GM12878 (cell line): ENCODE measurements at regions of chr16 and their contacts with region 1.

Region 1: DNA sequence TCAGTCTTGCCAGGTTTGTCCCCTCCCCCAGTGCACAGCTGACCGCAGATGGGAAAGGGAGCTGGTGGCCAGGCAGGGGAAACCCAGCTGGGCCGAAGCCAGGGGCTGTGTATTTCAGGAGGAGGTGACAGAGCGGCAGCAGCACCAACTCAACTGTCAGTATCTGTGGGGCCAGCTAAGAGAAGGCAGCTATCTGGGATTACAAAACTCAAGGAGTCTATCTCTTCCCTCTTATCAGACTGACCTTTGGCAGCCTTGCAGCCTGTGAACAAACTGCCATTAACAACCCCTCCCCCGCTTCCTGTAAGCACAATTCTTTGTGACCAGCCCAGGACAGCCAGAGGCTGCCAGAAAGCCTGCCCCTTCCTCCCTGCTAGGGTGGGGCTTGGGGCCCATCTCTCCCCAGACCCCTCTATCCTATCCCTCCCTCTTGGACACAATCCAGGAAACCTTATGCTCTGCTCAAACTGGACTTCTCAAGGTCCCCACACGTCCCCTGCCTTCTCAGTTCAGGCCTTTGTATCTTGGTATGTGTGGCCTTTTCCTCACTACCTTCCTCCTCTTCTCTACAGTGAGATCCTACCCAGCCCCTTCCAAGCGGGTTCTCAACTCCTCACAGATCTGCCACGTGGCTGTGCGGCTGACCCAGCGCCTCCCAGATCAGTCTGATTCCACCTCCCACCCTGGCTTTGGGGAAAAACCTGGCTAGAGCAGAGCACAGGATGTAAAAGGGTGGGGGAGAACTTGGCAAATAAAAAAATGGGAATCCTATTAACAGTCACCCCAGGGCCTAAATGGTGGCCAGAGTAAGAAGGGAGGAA is 10.5 kb downstream of the ST3GAL2 start:
- DNase-seq: peak; percentile 79
- ATAC-seq: peak; percentile 36
- H3K4me3 ChIP-seq: peak overlapping the region; percentile 67
- H3K27ac ChIP-seq: peak overlapping the region; percentile 98
- H3K4me1 ChIP-seq: peaks cover 52% of the 10 kb centered on the region
- H3K27me3 ChIP-seq: no peaks in the 10 kb centered on the region
- CTCF ChIP-seq: no peak
- EP300 ChIP-seq: peak in 1 of 2 experiments; percentile 74; a peak in 2 of 4 replicates
- POLR2A ChIP-seq: peak; percentile 61
- RAD21 ChIP-seq: peak; percentile 17; the same call in 1 of the 2 replicates

Region 2: GRCh38 chr16:69709456-69710084 is 718.8 kb before region 1 on chr16:
- CTCF ChIA-PET with region 1: no interaction called
- POLR2A ChIA-PET with region 1: no interaction called
- RAD21 ChIA-PET with region 1: no interaction called
- SMC1A ChIA-PET with region 1: no interaction called
- in situ Hi-C with region 1: no loop called
- intact Hi-C with region 1: no loop called
- DNase-seq: peak; percentile 15
- ATAC-seq: peak; percentile 83
- H3K4me3 ChIP-seq: no peak overlapping the region
- H3K27ac ChIP-seq: no peak overlapping the region
- H3K4me1 ChIP-seq: no peaks in the 10 kb centered on the region
- H3K27me3 ChIP-seq: no peaks in the 10 kb centered on the region
- CTCF ChIP-seq: peak; percentile 43 to 74 (median 64); a peak in 5 of 6 replicates
- EP300 ChIP-seq: no peak
- POLR2A ChIP-seq: no peak
- RAD21 ChIP-seq: peak; percentile 73

Region 3: GRCh38 chr16:70306880-70307279 is 121.5 kb before region 1 on chr16:
- CTCF ChIA-PET with region 1: no interaction called
- POLR2A ChIA-PET with region 1: no interaction called
- RAD21 ChIA-PET with region 1: no interaction called
- SMC1A ChIA-PET with region 1: no interaction called
- in situ Hi-C with region 1: no loop called
- intact Hi-C with region 1: no loop called
- DNase-seq: no peak
- ATAC-seq: no peak
- H3K4me3 ChIP-seq: no peak overlapping the region
- H3K27ac ChIP-seq: no peak overlapping the region
- H3K4me1 ChIP-seq: peaks cover 4% of the 10 kb centered on the region
- H3K27me3 ChIP-seq: no peaks in the 10 kb centered on the region
- CTCF ChIP-seq: no peak
- EP300 ChIP-seq: no peak
- POLR2A ChIP-seq: no peak
- RAD21 ChIP-seq: no peak

Region 4: GRCh38 chr16:70388006-70388680 is 40.2 kb before region 1 on chr16:
- CTCF ChIA-PET with region 1: no interaction called
- POLR2A ChIA-PET with region 1: no interaction called
- RAD21 ChIA-PET with region 1: no interaction called
- SMC1A ChIA-PET with region 1: no interaction called
- in situ Hi-C with region 1: no loop called
- intact Hi-C with region 1: no loop called
- DNase-seq: no peak
- ATAC-seq: no peak
- H3K4me3 ChIP-seq: no peak overlapping the region
- H3K27ac ChIP-seq: no peak overlapping the region
- H3K4me1 ChIP-seq: no peaks in the 10 kb centered on the region
- H3K27me3 ChIP-seq: no peaks in the 10 kb centered on the region
- CTCF ChIP-seq: no peak
- EP300 ChIP-seq: no peak
- POLR2A ChIP-seq: no peak
- RAD21 ChIP-seq: no peak

Region 5: DNA sequence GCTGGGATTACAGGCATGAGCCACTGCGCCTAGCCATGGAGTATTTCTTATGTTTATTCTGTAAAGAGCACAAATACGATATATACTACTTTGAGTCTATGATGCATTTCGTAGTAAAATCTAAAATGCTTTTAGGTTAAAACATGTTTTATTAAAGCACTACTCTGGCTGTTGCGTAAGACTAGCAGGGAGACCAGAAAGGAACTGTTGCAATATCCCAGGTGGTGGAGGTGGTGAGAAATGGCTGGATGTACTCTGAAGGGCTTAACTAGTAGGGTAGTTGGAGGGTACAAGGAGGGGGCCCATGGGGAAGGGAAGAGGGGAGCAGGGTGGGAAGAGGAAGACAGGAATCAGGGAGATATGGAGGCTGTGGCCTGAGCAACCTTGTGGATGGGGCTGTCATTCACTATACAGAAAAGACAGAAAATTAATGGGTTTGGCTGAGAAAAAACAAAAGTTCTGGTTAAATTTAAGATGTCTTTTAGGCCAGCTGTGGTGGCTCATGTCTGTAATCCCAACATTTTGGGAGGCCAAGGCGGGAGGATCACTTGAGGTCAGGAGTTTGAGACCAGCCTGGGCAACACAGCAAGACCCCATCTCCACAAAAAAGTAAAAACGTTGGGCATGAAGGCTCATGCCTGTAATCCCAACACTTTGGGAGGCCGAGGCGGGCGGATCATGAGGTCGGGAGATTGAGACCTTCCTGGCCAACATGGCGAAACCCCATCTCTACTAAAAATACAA is 25.3 kb before region 1 on chr16:
- CTCF ChIA-PET with region 1: interaction called, 10 read pairs
- POLR2A ChIA-PET with region 1: interaction called, 47 read pairs
- RAD21 ChIA-PET with region 1: interaction called, 38 read pairs
- SMC1A ChIA-PET with region 1: interaction called, 37 read pairs
- in situ Hi-C with region 1: no loop called
- intact Hi-C with region 1: loop called (anchors 1 kb)
- DNase-seq: no peak
- ATAC-seq: no peak
- H3K4me3 ChIP-seq: no peak overlapping the region
- H3K27ac ChIP-seq: peak overlapping the region; percentile 84
- H3K4me1 ChIP-seq: peaks cover 43% of the 10 kb centered on the region
- H3K27me3 ChIP-seq: no peaks in the 10 kb centered on the region; a peak in 1 of 4 replicates
- CTCF ChIP-seq: no peak
- EP300 ChIP-seq: no peak
- POLR2A ChIP-seq: no peak
- RAD21 ChIP-seq: no peak

Region 6: DNA sequence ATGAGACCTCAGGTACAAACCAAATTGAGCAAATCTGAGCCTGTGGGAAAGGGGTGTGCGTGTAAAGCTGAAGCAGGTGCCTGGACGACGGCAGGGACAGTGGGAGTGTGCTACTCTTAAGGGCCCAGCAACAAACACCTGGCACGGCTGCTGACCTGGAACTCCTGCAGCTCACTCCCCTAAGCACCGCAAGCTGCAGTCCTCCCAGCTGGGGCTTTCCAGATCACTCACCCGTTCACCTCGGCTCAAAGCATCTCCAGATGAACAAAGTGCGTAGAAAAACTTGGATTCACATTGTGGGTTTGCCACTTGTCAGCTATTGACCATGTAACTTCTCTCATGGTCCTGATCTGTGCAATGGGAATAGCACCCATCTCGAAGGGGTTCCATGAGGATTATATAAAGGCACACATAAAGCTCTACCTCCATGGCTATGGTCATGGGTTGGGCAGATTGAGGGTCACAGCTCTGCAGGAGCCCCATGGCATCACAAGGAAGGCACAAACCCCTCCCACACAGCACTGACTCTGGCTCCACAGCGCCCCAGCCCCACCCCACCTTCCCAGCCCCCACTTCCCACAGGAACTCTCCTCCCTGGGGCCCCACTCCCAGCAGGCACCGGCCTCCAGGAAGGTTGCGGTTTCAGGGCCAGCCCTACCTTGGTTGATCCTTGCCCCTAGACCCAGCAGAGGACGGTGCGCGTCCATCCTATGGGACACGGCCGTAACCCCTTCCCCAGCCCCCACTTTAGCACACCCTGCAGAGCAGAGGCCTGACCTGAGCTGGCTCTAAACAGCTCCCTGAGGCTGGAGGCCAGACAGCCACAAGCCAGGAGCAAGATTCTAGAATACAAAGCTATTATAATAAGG is 11.4 kb before region 1 on chr16:
- CTCF ChIA-PET with region 1: interaction called, 17 read pairs
- POLR2A ChIA-PET with region 1: interaction called, 58 read pairs
- RAD21 ChIA-PET with region 1: interaction called, 32 read pairs
- SMC1A ChIA-PET with region 1: interaction called, 23 read pairs
- in situ Hi-C with region 1: no loop called
- intact Hi-C with region 1: loop called (anchors 2 kb)
- DNase-seq: no peak
- ATAC-seq: peak; percentile 95
- H3K4me3 ChIP-seq: no peak overlapping the region
- H3K27ac ChIP-seq: peak overlapping the region; percentile 87
- H3K4me1 ChIP-seq: peaks cover 50% of the 10 kb centered on the region
- H3K27me3 ChIP-seq: no peaks in the 10 kb centered on the region
- CTCF ChIP-seq: no peak
- EP300 ChIP-seq: peak; percentile 60 to 69; a peak in 2 of 4 replicates
- POLR2A ChIP-seq: 0 out of 2 replicates have a peak, but pooled peaks have one; percentile 20
- RAD21 ChIP-seq: no peak

Region 7: DNA sequence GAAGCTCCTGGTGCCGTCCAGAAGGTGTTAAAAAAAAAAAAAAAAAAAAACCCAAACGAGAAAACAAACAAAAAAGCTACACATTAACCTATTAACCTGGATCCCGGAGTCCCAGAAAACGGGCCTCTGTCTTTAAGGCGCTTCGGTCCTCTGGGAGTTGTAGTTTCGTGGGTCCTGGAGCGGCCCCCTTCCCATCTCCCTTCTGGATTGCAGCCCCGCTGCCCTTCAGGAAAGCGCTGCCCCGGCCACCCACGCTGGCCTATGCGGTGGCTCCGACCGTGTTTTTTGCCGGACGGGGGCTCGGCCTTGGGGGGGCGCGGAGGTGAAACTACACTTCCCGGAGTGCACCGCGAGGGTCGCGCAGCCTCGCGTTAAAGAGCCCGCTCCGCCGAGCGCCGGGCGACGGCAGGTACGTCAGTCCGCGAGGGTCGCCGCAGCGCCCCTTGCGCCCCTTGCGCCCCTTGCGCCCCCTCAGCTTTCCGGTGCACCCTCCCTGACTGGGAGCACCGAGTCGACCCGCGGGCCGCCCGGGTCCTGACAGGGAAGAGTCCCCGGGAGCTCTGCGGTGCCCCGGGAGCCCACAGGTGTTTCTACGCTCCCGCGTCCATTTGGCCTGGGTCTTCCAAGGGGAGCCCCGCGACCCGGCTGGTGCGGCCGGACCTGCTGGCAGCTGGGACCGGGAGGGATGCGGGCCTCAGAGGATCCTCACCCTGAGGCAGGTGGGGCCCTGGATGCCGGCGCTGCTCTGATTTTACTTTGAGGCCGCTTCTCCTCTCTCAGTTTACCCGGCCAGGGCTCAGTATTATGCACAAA is 26.0 kb after region 1 on chr16 and contains the start of gene FCSK:
- CTCF ChIA-PET with region 1: interaction called, 8 read pairs
- POLR2A ChIA-PET with region 1: interaction called, 7 read pairs
- RAD21 ChIA-PET with region 1: interaction called, 15 read pairs
- SMC1A ChIA-PET with region 1: interaction called, 33 read pairs
- in situ Hi-C with region 1: no loop called
- intact Hi-C with region 1: no loop called
- DNase-seq: no peak
- ATAC-seq: peak; percentile 93
- H3K4me3 ChIP-seq: peak within 1 kb of the TSS; percentile 93
- H3K27ac ChIP-seq: peak within 1 kb of the TSS; percentile 95
- H3K4me1 ChIP-seq: no peaks in the 10 kb centered on the region
- H3K27me3 ChIP-seq: no peaks in the 10 kb centered on the region
- CTCF ChIP-seq: peak; percentile 13 to 22 (median 21); a peak in 3 of 6 replicates
- EP300 ChIP-seq: no peak
- POLR2A ChIP-seq: peak; percentile 74
- RAD21 ChIP-seq: no peak
- polyA plus RNA-seq, gene FCSK: 0.60 to 1.5 TPM

Region 8: DNA sequence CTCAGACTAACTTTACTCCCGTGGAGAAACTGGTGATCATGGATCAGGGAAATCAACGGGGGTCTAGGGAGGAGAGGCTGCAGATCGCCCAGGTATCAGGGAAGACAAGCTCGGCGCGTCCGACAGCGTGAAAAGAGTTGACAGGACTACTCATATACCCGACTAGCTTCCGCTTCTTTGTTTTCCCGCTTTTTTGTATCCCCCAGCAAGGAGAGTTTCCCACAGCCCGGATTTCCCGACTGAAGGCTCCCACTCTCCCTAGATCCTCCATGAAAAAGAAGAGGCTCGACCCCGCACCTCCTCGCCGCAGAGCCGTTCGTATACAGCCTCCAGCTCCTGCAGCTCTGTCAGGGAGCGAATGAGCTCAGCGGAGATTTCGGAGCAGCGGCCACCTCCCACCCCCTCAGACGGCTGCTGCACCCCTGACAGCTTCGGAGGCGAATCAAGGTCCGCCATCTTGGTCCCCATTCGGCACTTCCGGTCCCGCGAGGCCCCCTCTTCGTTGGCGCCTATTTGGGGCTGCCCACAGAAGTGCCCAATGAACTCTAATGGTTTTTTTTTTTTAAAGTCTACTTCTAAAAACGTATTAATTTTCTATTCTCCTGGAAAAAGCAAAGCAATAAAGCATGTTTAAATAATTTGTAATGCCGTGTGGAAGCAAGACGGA is 94.8 kb after region 1 on chr16 and contains the start of gene COG4:
- CTCF ChIA-PET with region 1: interaction called, 5 read pairs
- POLR2A ChIA-PET with region 1: interaction called, 7 read pairs
- RAD21 ChIA-PET with region 1: interaction called, 11 read pairs
- SMC1A ChIA-PET with region 1: interaction called, 22 read pairs
- in situ Hi-C with region 1: no loop called
- intact Hi-C with region 1: loop called (anchors 1 kb)
- DNase-seq: peak; percentile 58
- ATAC-seq: peak; percentile 67
- H3K4me3 ChIP-seq: peak within 1 kb of the TSS; percentile 86
- H3K27ac ChIP-seq: peak within 1 kb of the TSS; percentile 99
- H3K4me1 ChIP-seq: peaks cover 14% of the 10 kb centered on the region
- H3K27me3 ChIP-seq: no peaks in the 10 kb centered on the region
- CTCF ChIP-seq: no peak
- EP300 ChIP-seq: no peak
- POLR2A ChIP-seq: peak; percentile 93
- RAD21 ChIP-seq: no peak
- polyA plus RNA-seq, gene COG4: 7.0 to 8.9 TPM